Panc1 (cell line): ENCODE measurements at regions of chr10 and their contacts with region 1.

Region 1: GRCh38 chr10:103238506-103239252 is 7.0 kb upstream of the RPEL1 start:
- DNase-seq: no peak
- ATAC-seq: peak; percentile 76
- H3K4me3 ChIP-seq: no peak overlapping the region
- H3K27ac ChIP-seq: peak overlapping the region; percentile 77
- H3K4me1 ChIP-seq: peaks cover 36% of the 10 kb centered on the region
- H3K27me3 ChIP-seq: no peaks in the 10 kb centered on the region
- CTCF ChIP-seq: peak; percentile 43

Region 2: DNA sequence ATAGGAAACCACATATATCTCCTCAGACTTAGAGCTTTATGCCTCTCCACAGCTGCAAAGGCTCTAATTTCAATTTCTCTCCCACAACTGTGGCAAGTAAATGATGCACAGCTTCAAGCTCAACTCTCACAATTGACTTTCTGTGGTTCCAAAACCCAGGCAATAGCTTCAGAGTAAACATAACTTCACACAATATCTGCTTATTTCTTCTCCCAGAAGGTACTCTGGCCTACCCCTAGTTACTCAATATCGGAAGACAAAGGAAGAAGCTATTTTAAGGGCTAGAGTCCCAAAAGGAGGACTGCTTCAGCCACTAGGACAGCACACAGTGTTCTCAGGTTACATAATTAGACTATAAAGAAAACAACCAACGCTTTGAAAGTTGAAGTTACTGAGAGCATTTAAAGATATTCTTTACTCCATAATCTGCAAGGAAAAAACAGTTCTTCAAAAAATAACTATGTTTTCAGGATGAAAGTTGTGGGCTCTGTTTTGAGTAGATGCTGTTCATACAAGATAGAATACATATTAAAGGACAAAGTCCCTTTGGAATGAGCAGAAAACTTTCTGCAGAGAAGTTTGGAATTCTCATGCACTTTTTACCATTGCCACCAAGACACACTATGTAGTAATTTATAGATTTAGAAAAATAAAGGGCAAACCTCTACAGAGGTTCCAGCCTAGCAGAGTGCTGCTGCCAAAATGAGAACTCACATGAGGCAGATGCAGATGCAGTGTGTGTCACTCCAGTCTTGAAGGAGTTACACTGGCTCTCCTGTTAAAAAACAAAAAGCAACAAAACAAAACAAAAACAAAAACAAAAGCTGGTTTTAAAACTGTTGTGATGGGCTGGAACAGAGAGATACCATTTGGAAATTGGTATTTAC is 127.4 kb before region 1 on chr10:
- CTCF ChIA-PET with region 1: no interaction called
- POLR2A ChIA-PET with region 1: interaction called, 13 read pairs
- in situ Hi-C with region 1: no loop called
- intact Hi-C with region 1: loop called (anchors 10 kb)
- DNase-seq: no peak
- ATAC-seq: no peak
- H3K4me3 ChIP-seq: no peak overlapping the region
- H3K27ac ChIP-seq: no peak overlapping the region
- H3K4me1 ChIP-seq: peaks cover 17% of the 10 kb centered on the region
- H3K27me3 ChIP-seq: no peaks in the 10 kb centered on the region
- CTCF ChIP-seq: no peak

Region 3: GRCh38 chr10:103145860-103146466 is 92.7 kb before region 1 on chr10:
- CTCF ChIA-PET with region 1: no interaction called
- POLR2A ChIA-PET with region 1: interaction called, 12 read pairs
- in situ Hi-C with region 1: no loop called
- intact Hi-C with region 1: no loop called
- DNase-seq: peak; percentile 42
- ATAC-seq: no peak
- H3K4me3 ChIP-seq: no peak overlapping the region
- H3K27ac ChIP-seq: peak overlapping the region; percentile 15; the same call in 1 of the 2 replicates
- H3K4me1 ChIP-seq: peaks cover 41% of the 10 kb centered on the region
- H3K27me3 ChIP-seq: no peaks in the 10 kb centered on the region
- CTCF ChIP-seq: no peak

Region 4: GRCh38 chr10:103451831-103452505 is 213.3 kb after region 1 on chr10 and contains the start of gene CALHM2:
- CTCF ChIA-PET with region 1: interaction called, 11 read pairs
- POLR2A ChIA-PET with region 1: no interaction called
- in situ Hi-C with region 1: no loop called
- intact Hi-C with region 1: no loop called
- DNase-seq: no peak
- ATAC-seq: peak; percentile 63
- H3K4me3 ChIP-seq: peak within 1 kb of the TSS; percentile 34 to 46
- H3K27ac ChIP-seq: peak within 1 kb of the TSS; percentile 62
- H3K4me1 ChIP-seq: peaks cover 17% of the 10 kb centered on the region
- H3K27me3 ChIP-seq: no peaks in the 10 kb centered on the region
- CTCF ChIP-seq: no peak
- total RNA-seq, gene CALHM2: 5.9 TPM